PC-9 (cell line): ENCODE measurements at regions of chr6 and their contacts with region 1.

Region 1: GRCh38 chr6:37018198-37019064 is 13.0 kb downstream of the FGD2 start:
- DNase-seq: peak; percentile 81 to 84
- H3K4me3 ChIP-seq: no peak overlapping the region
- H3K27ac ChIP-seq: peak overlapping the region; percentile 67
- H3K4me1 ChIP-seq: peaks cover 48% of the 10 kb centered on the region
- H3K27me3 ChIP-seq: no peaks in the 10 kb centered on the region
- CTCF ChIP-seq: peak; percentile 90

Region 2: GRCh38 chr6:35634316-35634715 is 1384.1 kb before region 1 on chr6:
- CTCF ChIA-PET with region 1: no interaction called
- POLR2A ChIA-PET with region 1: no interaction called
- intact Hi-C with region 1: no loop called
- DNase-seq: no peak
- H3K4me3 ChIP-seq: no peak overlapping the region
- H3K27ac ChIP-seq: no peak overlapping the region
- H3K4me1 ChIP-seq: no peaks in the 10 kb centered on the region; the same call in 1 of the 2 replicates
- H3K27me3 ChIP-seq: no peaks in the 10 kb centered on the region
- CTCF ChIP-seq: no peak

Region 3: DNA sequence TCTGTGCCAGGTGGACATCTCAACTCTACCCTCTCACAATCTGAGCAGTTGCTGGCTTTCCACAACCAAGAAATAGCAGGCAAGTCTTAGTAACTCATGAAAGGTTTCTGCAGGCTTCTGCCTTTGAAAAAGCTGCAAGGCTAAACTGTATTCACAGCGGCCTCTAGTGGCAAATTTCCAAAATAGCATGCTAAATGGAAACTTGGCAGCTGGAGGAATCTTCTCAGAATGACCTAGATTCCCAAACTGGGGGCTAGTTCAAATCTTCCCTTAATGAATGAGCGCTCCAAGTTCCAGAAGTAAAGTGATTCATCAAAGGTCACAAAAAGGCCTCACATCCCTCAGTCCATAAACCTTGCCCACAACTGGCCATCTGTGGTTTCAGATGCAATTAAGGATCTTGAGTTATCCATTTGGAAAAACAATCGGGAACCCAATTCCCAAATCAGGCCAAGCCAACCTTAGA is 167.2 kb before region 1 on chr6:
- CTCF ChIA-PET with region 1: interaction called, 11 read pairs
- POLR2A ChIA-PET with region 1: no interaction called
- intact Hi-C with region 1: loop called (anchors 1 kb)
- DNase-seq: peak; percentile 34 to 47
- H3K4me3 ChIP-seq: no peak overlapping the region
- H3K27ac ChIP-seq: no peak overlapping the region
- H3K4me1 ChIP-seq: peaks cover 22% of the 10 kb centered on the region
- H3K27me3 ChIP-seq: no peaks in the 10 kb centered on the region
- CTCF ChIP-seq: peak; percentile 93

Region 4: GRCh38 chr6:36912586-36912985 is 105.8 kb before region 1 on chr6:
- CTCF ChIA-PET with region 1: interaction called, 36 read pairs
- POLR2A ChIA-PET with region 1: no interaction called
- intact Hi-C with region 1: loop called (anchors 1 kb)
- DNase-seq: peak; percentile 37 to 89
- H3K4me3 ChIP-seq: no peak overlapping the region
- H3K27ac ChIP-seq: no peak overlapping the region
- H3K4me1 ChIP-seq: peaks cover 33% of the 10 kb centered on the region
- H3K27me3 ChIP-seq: no peaks in the 10 kb centered on the region
- CTCF ChIP-seq: no peak

Region 5: GRCh38 chr6:37169496-37170272 is 151.3 kb after region 1 on chr6 and contains the start of gene PIM1:
- CTCF ChIA-PET with region 1: interaction called, 5 read pairs
- POLR2A ChIA-PET with region 1: no interaction called
- intact Hi-C with region 1: loop called (anchors 1 kb)
- DNase-seq: peak; percentile 90 to 95
- H3K4me3 ChIP-seq: peak within 1 kb of the TSS; percentile 64
- H3K27ac ChIP-seq: peak within 1 kb of the TSS; percentile 97
- H3K4me1 ChIP-seq: peaks cover 42% of the 10 kb centered on the region
- H3K27me3 ChIP-seq: no peaks in the 10 kb centered on the region
- CTCF ChIP-seq: no peak
- total RNA-seq, gene PIM1: 51.0 and 60.3 TPM in 2 replicates

Region 6: DNA sequence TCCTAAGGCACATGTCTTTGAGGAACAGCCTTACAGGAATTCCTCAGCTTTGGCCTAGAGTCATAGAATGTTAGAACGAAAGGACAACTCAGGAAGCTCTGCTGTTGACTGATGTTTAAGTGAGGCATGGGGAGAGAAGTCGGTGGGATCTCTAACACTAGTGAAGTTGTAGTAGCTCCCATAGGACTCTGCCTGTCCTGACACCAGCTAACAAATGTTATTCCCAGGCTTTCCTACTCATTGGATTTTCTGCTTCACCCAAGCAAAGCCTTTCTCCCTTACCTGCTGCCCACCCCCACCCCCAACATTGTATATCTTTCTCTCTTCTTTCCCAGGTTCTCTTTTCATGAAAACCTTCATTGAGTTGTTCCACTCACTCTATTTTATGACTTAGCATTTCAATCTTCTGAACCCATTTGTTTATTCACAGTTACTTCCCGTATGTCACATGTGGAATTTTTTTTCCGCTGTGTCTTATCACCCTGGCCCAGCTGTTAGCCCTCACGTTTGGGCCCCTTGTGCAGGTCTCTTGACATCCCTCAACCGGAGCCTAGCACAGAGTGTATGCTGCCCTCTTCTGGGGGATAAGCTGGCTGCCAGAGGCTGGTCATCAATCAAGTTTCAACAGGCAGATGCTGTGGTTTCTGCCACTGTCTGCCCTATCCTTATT is 296.2 kb after region 1 on chr6:
- CTCF ChIA-PET with region 1: interaction called, 4 read pairs
- POLR2A ChIA-PET with region 1: no interaction called
- intact Hi-C with region 1: loop called (anchors 2 kb)
- DNase-seq: no peak
- H3K4me3 ChIP-seq: no peak overlapping the region
- H3K27ac ChIP-seq: no peak overlapping the region
- H3K4me1 ChIP-seq: peaks cover 9% of the 10 kb centered on the region
- H3K27me3 ChIP-seq: no peaks in the 10 kb centered on the region
- CTCF ChIP-seq: peak; percentile 57